Left colon (tissue), 2 donors: ENCODE measurements at regions of chr12 and their contacts with region 1.

Region 1: DNA sequence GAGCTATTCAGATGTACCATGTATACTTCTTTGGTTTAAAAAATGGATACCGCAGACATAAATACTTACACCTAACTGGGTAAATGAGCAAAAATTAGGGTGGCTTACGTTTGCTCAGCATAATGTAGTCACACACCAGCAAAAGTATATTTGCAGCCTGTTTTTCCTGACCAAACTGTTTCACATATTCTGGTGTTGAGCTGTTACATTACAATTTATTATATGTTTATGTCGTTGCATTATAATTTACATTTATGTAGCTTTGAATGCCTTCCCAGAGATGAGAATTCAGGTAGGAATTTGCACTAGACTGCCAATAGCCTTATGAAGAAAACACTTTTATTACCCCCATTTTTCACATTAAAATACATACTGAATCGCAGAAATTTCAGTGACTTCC is 183.3 kb downstream of the PTPRO start:
- DNase-seq: no peak
- ATAC-seq: no peak

Region 2: GRCh38 chr12:15293731-15294130 is 211.9 kb before region 1 on chr12:
- intact Hi-C with region 1: loop called in 1 of 2 experiments (anchors 10 kb)
- DNase-seq: no peak
- ATAC-seq: no peak

Region 3: DNA sequence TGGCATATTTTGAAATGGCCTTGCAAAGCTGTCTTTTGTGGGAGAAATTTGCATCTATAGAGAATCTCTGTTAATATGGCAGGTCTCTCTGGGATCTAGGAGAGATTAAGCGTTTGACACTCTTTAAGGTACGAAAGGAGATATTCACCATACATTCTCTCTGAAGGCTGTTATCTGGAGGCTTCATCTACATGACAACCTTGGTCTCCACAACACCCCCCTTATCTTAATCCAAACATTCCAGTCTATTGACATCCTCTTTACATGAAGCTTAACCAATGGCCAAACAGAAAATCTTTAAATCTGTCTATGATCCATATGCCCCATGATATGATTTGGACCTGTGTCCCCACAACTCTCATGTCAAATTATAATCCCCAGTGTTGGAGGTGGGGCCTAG is 542.9 kb after region 1 on chr12:
- intact Hi-C with region 1: no loop called
- DNase-seq: no peak
- ATAC-seq: no peak